Dorsolateral prefrontal cortex (tissue), 120 donors: ENCODE measurements at regions of chr15 and their contacts with region 1.

Region 1: DNA sequence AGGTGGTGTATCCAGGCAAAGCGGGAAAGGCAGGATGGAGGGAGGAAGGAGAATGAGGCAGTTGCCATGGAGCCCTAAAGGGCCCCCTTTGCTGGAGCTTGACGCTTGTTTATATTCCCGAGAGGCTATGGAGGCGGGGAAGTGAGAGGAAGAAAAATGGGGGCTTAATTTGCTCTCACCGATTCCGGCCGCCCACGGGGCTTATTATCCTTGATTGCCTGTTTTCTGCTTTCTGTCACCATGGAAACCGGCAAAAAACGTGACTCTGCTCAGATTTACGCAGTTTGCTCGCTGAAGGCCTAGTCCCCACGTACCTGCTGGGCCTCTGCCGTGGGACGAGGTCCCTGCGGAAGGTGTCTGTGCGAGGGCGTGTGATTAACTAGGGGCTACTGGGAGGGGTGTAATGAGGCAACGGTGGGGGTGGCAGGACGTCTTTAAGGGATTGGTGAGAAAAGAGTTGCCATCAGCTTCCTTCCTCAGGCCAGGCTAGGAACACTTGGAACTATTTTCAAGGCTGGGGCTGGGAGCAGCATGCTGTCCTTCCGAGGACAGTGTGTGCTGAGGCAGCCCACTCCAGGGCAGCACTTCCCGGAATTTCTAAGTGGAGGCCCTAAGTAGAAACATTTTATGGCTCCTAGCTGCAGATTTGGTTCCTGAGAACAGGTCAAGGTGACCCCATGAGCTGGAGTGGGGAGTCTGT is 110.8 kb upstream of the NDN start:
- DNase-seq: peak in 6 of 10 donors; percentile 19 to 45 (median 42)
- H3K4me3 ChIP-seq: no peak overlapping the region
- H3K27ac ChIP-seq: peak overlapping the region in 8 of 59 donors; percentile 8 to 35 (median 14)
- H3K27me3 ChIP-seq: peaks cover 0 to 13% (median 0%) of the 10 kb centered on the region in 45 donors
- CTCF ChIP-seq: no peak

Region 2: GRCh38 chr15:23073890-23074646 is 723.8 kb before region 1 on chr15:
- intact Hi-C with region 1: no loop called
- DNase-seq: peak in 5 of 10 donors; percentile 27 to 72 (median 52)
- H3K4me3 ChIP-seq: peak overlapping the region in 31 of 59 donors; percentile 1 to 48 (median 20)
- H3K27ac ChIP-seq: peak overlapping the region in 1 of 59 donors; percentile 18
- H3K27me3 ChIP-seq: peaks cover 0 to 28% (median 0%) of the 10 kb centered on the region in 45 donors
- CTCF ChIP-seq: no peak

Region 3: DNA sequence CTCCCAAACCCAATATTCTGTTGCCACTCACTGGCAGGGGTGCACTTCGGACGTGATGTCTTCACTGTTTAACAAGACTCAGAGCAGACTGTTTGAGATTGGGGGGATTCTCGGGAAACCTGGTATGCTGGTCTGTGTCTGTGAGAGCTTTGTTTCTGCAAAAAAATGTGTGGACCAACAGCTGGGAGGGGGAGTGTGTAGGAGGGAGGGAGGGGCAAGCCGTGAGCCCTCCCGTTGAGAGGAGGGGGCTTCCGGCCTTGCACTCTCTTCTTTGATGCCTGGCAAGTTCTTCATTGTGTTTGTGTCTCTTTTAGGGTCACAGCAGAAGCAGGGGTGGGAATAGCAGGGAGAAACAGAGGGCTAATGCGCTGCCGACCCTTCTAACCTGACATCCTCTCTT is 35.9 kb before region 1 on chr15:
- intact Hi-C with region 1: no loop called
- DNase-seq: no peak
- H3K4me3 ChIP-seq: no peak overlapping the region
- H3K27ac ChIP-seq: no peak overlapping the region
- H3K27me3 ChIP-seq: peaks cover 0 to 45% (median 8%) of the 10 kb centered on the region in 45 donors
- CTCF ChIP-seq: no peak

Region 4: GRCh38 chr15:23839893-23840474 is 42.1 kb after region 1 on chr15:
- intact Hi-C with region 1: loop called in 1 of 2 experiments (anchors 10 kb)
- DNase-seq: no peak
- H3K4me3 ChIP-seq: no peak overlapping the region
- H3K27ac ChIP-seq: no peak overlapping the region
- H3K27me3 ChIP-seq: peaks cover 0 to 41% (median 2%) of the 10 kb centered on the region in 45 donors
- CTCF ChIP-seq: no peak